T-cell (primary cell): ENCODE measurements at regions of chr7 and their contacts with region 1.

Region 1: GRCh38 chr7:135441791-135442190 is 68.1 kb downstream of the CNOT4 start:
- DNase-seq: no peak
- ATAC-seq: no peak
- H3K4me3 ChIP-seq: no peak overlapping the region
- H3K4me3 Mint-ChIP-seq: no peak overlapping the region
- H3K27ac ChIP-seq: no peak overlapping the region
- H3K27ac Mint-ChIP-seq: no peak overlapping the region
- H3K4me1 ChIP-seq: peaks cover 0 to 6% of the 10 kb centered on the region in 2 experiments
- H3K4me1 Mint-ChIP-seq: peaks cover 24 to 30% (median 30%) of the 10 kb centered on the region in 3 donors
- H3K27me3 ChIP-seq: no peaks in the 10 kb centered on the region
- H3K27me3 Mint-ChIP-seq: no peaks in the 10 kb centered on the region

Region 2: DNA sequence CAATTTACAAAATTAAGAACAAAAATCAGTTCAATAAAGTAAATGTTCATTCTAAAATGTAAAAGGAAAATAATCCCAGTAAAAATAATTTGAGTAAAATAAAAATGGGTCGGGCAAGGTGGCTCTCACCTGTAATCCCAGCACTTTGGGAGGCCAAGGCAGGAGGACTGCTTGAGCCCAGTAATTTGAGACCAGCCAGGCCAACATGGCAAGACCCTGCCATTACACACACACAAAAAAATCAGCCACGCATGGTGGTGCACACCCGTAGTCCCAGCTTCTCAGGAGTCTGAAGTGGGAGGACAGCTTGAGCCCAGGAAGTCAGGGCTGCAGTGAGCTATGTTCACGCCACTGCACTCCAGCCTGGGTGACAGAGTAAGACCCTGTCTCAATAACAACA is 33.7 kb after region 1 on chr7:
- CTCF ChIA-PET with region 1: no interaction called
- POLR2A ChIA-PET with region 1: interaction called in 1 of 2 experiments, 10 read pairs
- DNase-seq: no peak
- ATAC-seq: no peak
- H3K4me3 ChIP-seq: no peak overlapping the region
- H3K4me3 Mint-ChIP-seq: no peak overlapping the region
- H3K27ac ChIP-seq: no peak overlapping the region
- H3K27ac Mint-ChIP-seq: no peak overlapping the region
- H3K4me1 ChIP-seq: no peaks in the 10 kb centered on the region
- H3K4me1 Mint-ChIP-seq: peaks cover 17 to 30% (median 28%) of the 10 kb centered on the region in 3 donors
- H3K27me3 ChIP-seq: no peaks in the 10 kb centered on the region
- H3K27me3 Mint-ChIP-seq: no peaks in the 10 kb centered on the region